ENCODE measurements at regions of chr2 and their contacts with region 1.

Region 1: DNA sequence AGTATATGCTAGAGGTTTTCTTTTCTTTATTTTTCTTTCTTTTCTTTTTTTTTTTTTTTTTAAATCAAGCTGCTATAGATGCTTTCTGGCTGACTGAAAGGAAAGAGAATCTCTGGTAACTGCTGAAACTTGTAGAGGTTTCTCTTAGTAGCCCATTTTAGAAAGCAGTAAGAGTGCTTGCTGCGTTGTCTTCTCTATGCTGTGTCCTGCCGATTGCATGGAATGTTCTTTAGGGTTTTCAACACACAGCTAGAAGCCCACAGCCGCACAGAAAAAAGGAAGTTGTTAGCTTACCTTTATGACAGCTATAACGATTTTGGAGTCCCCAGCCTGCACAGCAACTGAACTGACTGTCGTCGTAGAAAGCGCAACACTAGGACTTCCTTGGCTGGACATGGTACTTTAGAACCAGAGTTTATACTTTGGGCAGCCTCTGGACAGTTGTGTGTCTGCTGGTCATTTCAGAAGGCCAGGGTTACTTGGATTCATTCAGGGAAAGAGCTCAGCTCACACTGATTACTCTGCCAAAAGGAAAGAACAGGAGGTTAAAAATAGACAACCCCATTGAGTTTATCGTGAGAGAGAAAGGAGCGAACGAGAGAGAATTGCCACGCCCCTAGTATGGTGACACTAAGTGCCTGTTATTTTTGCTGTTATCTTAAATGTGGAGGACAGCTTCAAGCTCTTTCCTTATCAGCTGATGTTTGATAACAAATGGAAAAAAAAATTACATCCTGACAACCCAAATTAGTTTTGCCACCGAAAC is at the start of gene CCDC141:
- DNase-seq: peak; percentile 7 to 57 (median 40)
- ATAC-seq: peak; percentile 78
- H3K4me3 ChIP-seq: peak within 1 kb of the TSS; percentile 56
- H3K4me3 Mint-ChIP-seq: peak within 1 kb of the TSS; percentile 79 to 97 (median 93)
- H3K27ac ChIP-seq: peak within 1 kb of the TSS; percentile 81
- H3K27ac Mint-ChIP-seq: peak within 1 kb of the TSS; percentile 89 to 99 (median 97)
- H3K4me1 ChIP-seq: peaks cover 4 to 36% of the 10 kb centered on the region in 2 donors
- H3K4me1 Mint-ChIP-seq: peaks cover 10 to 67% (median 52%) of the 10 kb centered on the region in 7 donors
- H3K27me3 ChIP-seq: no peaks in the 10 kb centered on the region
- H3K27me3 Mint-ChIP-seq: no peaks in the 10 kb centered on the region
- total RNA-seq, gene CCDC141: 11.6 to 39.2 (median 35.1) TPM

Region 2: GRCh38 chr2:178874529-178875240 is 175.0 kb before region 1 on chr2:
- CTCF ChIA-PET with region 1: no interaction called
- POLR2A ChIA-PET with region 1: no interaction called
- intact Hi-C with region 1: no loop called
- DNase-seq: no peak
- ATAC-seq: no peak
- H3K4me3 ChIP-seq: no peak overlapping the region
- H3K4me3 Mint-ChIP-seq: no peak overlapping the region
- H3K27ac ChIP-seq: no peak overlapping the region
- H3K27ac Mint-ChIP-seq: no peak overlapping the region
- H3K4me1 ChIP-seq: no peaks in the 10 kb centered on the region
- H3K4me1 Mint-ChIP-seq: peaks cover 0 to 25% (median 0%) of the 10 kb centered on the region in 7 donors
- H3K27me3 ChIP-seq: no peaks in the 10 kb centered on the region
- H3K27me3 Mint-ChIP-seq: no peaks in the 10 kb centered on the region

Region 3: DNA sequence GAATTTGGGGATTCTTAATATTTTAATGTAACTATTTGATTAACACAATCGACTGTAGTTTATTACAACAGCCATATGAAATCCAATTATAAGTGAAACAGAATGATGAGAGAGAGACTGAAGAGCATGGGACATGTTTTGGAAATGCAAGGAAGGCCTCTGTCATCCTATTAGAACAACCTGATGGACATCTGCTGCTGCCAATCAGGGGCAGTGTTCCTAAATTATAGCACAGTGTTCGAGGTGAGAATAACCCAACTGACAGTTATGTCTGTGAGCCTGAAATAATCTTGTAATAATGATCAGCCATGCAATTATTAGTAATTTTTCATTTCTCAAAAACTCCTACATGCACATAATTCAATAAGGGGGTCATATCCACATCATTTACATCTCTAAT is 73.4 kb before region 1 on chr2:
- CTCF ChIA-PET with region 1: interaction called, 3 read pairs
- POLR2A ChIA-PET with region 1: no interaction called
- intact Hi-C with region 1: loop called in 1 of 2 experiments (anchors 1 kb)
- DNase-seq: no peak
- ATAC-seq: no peak
- H3K4me3 ChIP-seq: no peak overlapping the region
- H3K4me3 Mint-ChIP-seq: no peak overlapping the region
- H3K27ac ChIP-seq: no peak overlapping the region
- H3K27ac Mint-ChIP-seq: no peak overlapping the region
- H3K4me1 ChIP-seq: no peaks in the 10 kb centered on the region
- H3K4me1 Mint-ChIP-seq: peaks cover 0 to 6% (median 2%) of the 10 kb centered on the region in 7 donors
- H3K27me3 ChIP-seq: no peaks in the 10 kb centered on the region
- H3K27me3 Mint-ChIP-seq: no peaks in the 10 kb centered on the region

Region 4: DNA sequence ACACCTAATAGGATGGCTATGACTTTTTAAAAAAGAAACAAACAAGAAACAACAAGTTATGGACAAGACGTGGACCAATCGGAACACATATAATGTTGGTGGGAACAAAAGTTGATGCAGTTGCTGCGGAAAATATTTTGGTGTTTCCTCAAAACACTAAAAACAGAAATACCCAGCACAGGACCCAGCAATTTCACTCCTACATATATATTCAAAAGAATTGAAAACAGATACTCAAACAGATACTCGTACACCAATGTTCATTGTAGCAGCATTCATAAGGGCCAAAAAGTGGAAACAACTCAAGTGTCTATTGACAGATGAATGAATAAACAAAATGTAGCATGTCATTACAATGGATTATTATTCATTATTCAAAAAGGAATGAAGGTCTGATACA is 11.9 kb before region 1 on chr2:
- CTCF ChIA-PET with region 1: interaction called, 5 read pairs
- POLR2A ChIA-PET with region 1: interaction called, 42 read pairs
- intact Hi-C with region 1: loop called in 1 of 2 experiments (anchors 1 kb)
- DNase-seq: no peak
- ATAC-seq: no peak
- H3K4me3 ChIP-seq: no peak overlapping the region
- H3K4me3 Mint-ChIP-seq: no peak overlapping the region
- H3K27ac ChIP-seq: no peak overlapping the region
- H3K27ac Mint-ChIP-seq: peak overlapping the region in 6 of 9 donors; percentile 6 to 80 (median 34)
- H3K4me1 ChIP-seq: no peaks in the 10 kb centered on the region
- H3K4me1 Mint-ChIP-seq: peaks cover 15 to 63% (median 29%) of the 10 kb centered on the region in 7 donors
- H3K27me3 ChIP-seq: no peaks in the 10 kb centered on the region
- H3K27me3 Mint-ChIP-seq: no peaks in the 10 kb centered on the region

Region 5: DNA sequence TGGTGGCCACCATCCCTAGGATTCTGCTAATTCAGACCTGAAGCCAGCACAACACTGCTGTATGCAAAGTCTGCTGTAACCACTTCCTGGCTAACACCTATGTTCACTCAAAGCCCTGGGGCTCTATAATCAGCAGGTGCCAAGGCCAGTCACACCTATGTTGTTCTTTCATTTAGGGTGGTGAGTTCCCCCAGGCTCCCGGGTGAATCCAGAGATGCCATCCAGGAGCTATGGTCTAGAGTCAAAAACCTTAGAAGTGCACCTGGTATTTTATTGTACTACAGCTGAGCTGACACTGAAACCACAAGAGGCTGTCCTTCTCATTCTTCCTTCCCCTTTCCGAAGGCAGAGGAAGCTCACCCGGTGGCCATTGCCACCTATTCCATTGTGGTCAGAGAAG is 46.4 kb after region 1 on chr2:
- CTCF ChIA-PET with region 1: no interaction called
- POLR2A ChIA-PET with region 1: no interaction called
- intact Hi-C with region 1: loop called in 1 of 2 experiments (anchors 5 kb)
- DNase-seq: peak in 6 of 9 donors; percentile 8 to 33 (median 25)
- ATAC-seq: peak; percentile 65
- H3K4me3 ChIP-seq: peak overlapping the region; percentile 27
- H3K4me3 Mint-ChIP-seq: peak overlapping the region; percentile 3 to 64 (median 26)
- H3K27ac ChIP-seq: no peak overlapping the region
- H3K27ac Mint-ChIP-seq: peak overlapping the region in 8 of 9 donors; percentile 3 to 77 (median 31)
- H3K4me1 ChIP-seq: peaks cover 9 to 14% of the 10 kb centered on the region in 2 donors
- H3K4me1 Mint-ChIP-seq: peaks cover 7 to 34% (median 21%) of the 10 kb centered on the region in 7 donors
- H3K27me3 ChIP-seq: no peaks in the 10 kb centered on the region
- H3K27me3 Mint-ChIP-seq: no peaks in the 10 kb centered on the region

Region 6: DNA sequence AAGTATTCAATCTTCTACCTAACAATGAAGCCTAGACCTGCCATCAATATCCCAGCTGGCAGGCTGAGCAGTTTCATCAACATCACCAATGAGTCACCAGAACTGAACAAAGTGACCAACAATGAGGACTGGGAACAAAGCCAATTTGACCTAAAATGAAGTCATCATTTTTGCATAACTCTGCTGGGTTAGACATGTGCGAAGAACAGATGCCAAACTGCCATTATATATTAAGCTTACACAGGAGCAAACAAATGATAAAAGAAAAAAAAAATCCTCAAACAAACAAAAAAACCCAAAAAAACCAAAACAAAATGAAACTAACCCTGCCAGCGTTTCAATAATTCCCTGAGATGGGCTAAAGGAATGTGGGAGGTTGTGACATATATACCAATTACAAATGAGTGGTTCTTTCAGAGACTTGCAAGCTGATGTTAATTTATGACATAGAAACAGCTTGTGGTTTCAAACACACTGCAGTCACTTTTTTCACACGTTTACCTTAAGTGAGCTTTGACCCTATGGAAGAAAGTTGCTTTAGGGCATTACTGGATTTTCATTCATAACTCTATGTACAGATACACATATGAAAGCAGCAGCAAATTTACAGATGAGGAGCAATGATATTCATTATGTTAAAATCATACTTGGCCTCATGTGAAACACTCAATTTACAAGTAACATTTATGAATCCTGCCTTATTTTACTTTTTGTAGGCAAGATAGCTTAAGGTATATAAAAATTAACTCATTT is 57.1 kb after region 1 on chr2:
- CTCF ChIA-PET with region 1: no interaction called
- POLR2A ChIA-PET with region 1: interaction called, 10 read pairs
- intact Hi-C with region 1: loop called in 1 of 2 experiments (anchors 5 kb)
- DNase-seq: no peak
- ATAC-seq: peak; percentile 36
- H3K4me3 ChIP-seq: no peak overlapping the region
- H3K4me3 Mint-ChIP-seq: peak overlapping the region in 4 of 10 donors; percentile 7 to 70 (median 50)
- H3K27ac ChIP-seq: no peak overlapping the region
- H3K27ac Mint-ChIP-seq: peak overlapping the region in 6 of 9 donors; percentile 25 to 87 (median 50)
- H3K4me1 ChIP-seq: peaks cover 0 to 18% of the 10 kb centered on the region in 2 donors
- H3K4me1 Mint-ChIP-seq: peaks cover 10 to 41% (median 26%) of the 10 kb centered on the region in 7 donors
- H3K27me3 ChIP-seq: no peaks in the 10 kb centered on the region
- H3K27me3 Mint-ChIP-seq: no peaks in the 10 kb centered on the region